Cardiac septum (tissue), 1 donor: ENCODE measurements at regions of chr12 and their contacts with region 1.

Region 1: DNA sequence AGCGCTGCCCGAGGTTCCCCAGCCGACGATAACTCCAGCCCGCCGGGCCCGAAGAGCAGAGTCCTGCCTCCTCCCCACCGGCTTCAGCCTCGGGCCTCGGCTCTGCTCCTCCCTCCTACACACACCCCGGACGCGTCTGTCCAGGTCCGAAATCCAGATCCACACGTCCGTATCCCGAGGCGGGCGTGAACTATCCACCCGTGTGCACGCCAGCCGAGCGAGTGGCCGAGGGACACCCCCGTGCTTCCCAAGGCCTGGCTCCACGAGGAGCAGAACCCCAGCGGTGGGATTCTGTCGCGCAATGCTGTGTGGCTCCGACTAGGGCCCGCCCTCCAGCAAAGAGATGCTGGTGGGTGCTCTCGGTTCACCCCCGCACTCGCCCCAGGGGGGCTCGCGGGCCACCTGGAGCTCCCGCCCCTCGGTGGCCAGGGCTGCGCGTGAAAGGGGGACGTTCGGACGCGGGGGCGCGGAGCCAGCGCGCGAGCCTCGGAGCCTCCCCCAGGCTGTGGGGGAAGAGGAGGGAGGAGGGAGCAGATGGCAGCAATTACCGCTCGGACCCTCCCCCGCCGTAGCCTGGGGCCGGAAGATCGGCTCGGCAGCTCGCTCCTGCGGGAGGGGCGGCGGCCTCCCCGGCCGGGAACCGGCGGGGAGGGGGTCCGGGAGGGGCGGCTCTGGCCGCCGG is 18.9 kb upstream of the ANKRD33 start:
- DNase-seq: no peak

Region 2: GRCh38 chr12:51683726-51684357 is 185.1 kb before region 1 on chr12:
- intact Hi-C with region 1: loop called (anchors 10 kb)
- DNase-seq: no peak

Region 3: GRCh38 chr12:51823875-51824565 is 44.9 kb before region 1 on chr12:
- intact Hi-C with region 1: loop called (anchors 10 kb)
- DNase-seq: no peak